Activated B cell treated with CpG ODN at 0.5 μM for 24 hours (primary cell): ENCODE measurements at regions of chr19 and their contacts with region 1.

Region 1: GRCh38 chr19:47765523-47766358 is 12.8 kb upstream of the SELENOW start:
- DNase-seq: no peak
- ATAC-seq: no peak
- H3K4me3 Mint-ChIP-seq: no peak overlapping the region
- H3K27ac Mint-ChIP-seq: no peak overlapping the region
- H3K4me1 Mint-ChIP-seq: no peaks in the 10 kb centered on the region
- H3K27me3 Mint-ChIP-seq: no peaks in the 10 kb centered on the region
- CTCF ChIP-seq: no peak

Region 2: GRCh38 chr19:47863514-47863936 is 97.8 kb after region 1 on chr19:
- CTCF ChIA-PET with region 1: no interaction called
- POLR2A ChIA-PET with region 1: no interaction called
- intact Hi-C with region 1: loop called (anchors 1 kb)
- DNase-seq: peak; percentile 66
- ATAC-seq: peak; percentile 54
- H3K4me3 Mint-ChIP-seq: no peak overlapping the region
- H3K27ac Mint-ChIP-seq: no peak overlapping the region
- H3K4me1 Mint-ChIP-seq: no peaks in the 10 kb centered on the region
- H3K27me3 Mint-ChIP-seq: peaks cover 23% of the 10 kb centered on the region
- CTCF ChIP-seq: peak; percentile 73